AG04449 (cell line): ENCODE measurements at regions of chr4 and their contacts with region 1.

Region 1: GRCh38 chr4:76213415-76214176 is at the start of gene SCARB2:
- DNase-seq: no peak
- H3K4me3 ChIP-seq: peak within 1 kb of the TSS; percentile 82
- CTCF ChIP-seq: no peak

Region 2: DNA sequence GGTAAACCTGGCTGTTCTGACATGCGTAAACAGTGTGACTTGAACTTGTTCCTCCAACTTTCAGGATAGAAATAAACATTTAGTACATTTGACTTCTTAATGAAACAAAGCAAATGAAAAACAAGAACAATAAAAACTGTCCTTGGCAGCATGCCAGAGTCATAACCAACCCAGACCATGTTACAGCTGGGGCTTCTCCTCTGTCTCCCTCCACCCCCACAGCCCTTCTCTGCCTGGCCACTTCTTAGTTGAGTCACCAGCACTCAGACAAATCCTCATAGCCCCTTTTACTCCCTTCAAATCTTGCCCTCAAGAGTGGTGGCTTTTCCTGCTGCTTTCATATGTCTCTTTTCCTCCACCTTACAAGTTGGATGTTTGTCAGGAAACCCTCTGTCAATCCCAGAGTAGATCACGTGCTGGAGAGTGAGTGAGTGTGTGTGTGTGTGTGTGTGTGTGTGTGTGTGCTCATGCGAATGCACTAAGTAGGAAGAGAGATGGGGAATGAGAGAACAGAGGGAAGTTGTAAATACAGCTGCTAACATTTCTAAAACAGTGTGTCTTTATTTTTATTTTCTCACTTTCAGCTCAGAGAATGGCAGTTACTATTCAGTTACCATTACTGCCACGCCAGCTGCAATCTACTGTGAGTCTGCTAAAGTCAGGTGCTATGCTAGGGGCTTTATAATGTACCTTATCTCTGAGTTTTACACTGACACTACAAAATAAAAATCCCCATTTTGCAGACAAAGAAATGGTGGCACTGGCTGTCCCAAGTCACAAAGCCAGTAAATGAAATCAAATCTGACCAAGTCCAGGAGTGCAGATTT is 15.0 kb before region 1 on chr4:
- CTCF ChIA-PET with region 1: no interaction called
- POLR2A ChIA-PET with region 1: interaction called, 10 read pairs
- DNase-seq: no peak
- H3K4me3 ChIP-seq: no peak overlapping the region
- CTCF ChIP-seq: no peak

Region 3: DNA sequence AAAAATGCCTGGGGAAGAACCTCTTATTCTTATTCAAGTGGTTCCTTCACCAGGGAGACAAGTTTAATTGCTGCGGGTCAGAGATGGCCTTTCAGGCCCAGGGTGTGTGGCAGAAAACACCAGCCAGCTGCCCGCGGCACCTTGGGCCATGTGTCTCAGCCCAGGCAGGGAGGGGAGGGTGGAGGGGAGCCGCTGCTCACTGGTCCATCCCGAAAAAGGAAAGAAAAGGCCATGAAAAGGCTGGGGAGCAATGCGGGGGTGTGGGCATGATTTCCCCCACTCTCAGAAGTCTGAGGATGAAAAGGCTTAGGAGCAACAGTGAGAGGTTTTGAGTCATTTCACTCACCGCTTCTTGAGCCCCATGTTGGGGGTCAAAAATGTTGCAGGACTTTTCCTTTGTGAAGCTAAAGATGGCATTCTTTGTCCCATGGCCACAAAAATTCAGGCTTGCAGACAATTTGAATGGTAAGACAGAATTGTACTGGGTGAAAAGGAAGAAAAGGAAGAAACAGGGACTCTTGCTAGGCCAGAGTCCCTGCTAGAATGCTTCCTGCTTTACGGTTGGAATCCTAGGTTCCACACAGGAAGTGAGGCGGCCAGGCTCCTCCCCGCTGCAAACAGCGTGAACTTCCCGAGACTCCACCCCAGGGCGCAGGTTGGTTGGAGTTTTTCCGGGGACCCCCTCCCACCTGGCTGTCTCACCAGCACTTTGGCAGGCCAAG is 20.5 kb after region 1 on chr4:
- CTCF ChIA-PET with region 1: no interaction called
- POLR2A ChIA-PET with region 1: no interaction called
- DNase-seq: no peak
- H3K4me3 ChIP-seq: no peak overlapping the region
- CTCF ChIP-seq: no peak